ENCODE measurements at regions of chr6 and their contacts with region 1.

Region 1: DNA sequence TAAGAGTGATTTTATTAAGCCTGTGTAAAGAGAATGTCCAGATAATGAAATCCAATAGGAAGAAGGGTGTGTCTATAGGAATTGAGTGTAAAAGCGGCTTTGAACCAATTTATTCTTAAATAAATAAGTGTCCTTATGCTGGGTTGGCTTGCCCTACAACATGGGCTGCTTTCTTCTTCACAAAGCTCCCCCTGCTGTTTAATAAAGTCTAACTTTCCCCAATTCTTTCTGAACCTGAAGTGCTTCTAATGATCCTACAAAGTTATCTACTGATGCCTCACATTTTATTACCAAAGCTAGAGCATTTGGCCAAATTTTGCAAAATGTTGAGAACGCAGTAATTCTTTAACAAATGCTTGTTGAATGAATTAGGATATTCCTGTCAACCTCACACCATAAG is 36.3 kb upstream of the SIRT5 start:
- DNase-seq: no peak
- H3K4me3 ChIP-seq: no peak overlapping the region
- H3K27ac ChIP-seq: no peak overlapping the region
- H3K4me1 ChIP-seq: no peaks in the 10 kb centered on the region
- H3K27me3 ChIP-seq: no peaks in the 10 kb centered on the region
- CTCF ChIP-seq: peak in 3 of 4 experiments; percentile 41 to 60 (median 57)
- POLR2A ChIP-seq: no peak

Region 2: DNA sequence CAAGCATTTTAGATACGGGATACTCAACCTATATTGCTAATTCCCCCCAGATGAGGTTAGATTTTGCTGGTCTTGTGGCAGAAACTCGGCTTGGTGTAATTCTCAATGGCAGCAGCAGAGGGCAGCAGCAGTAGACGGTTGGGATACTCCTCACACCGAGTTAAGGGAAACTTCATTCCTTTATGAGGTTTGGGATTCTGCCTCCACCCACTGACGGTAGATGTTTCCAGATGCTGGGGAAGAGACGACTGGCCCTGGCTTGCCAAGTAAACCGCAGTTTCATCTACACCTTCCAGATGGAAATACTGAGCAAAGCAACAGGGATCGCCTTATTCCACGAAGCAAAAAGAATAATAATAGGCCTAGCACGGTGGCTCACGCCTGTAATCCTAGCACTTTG is 201.5 kb before region 1 on chr6:
- intact Hi-C with region 1: loop called (anchors 2 kb)
- DNase-seq: peak; percentile 74
- H3K4me3 ChIP-seq: no peak overlapping the region
- H3K27ac ChIP-seq: no peak overlapping the region
- H3K4me1 ChIP-seq: no peaks in the 10 kb centered on the region
- H3K27me3 ChIP-seq: no peaks in the 10 kb centered on the region
- CTCF ChIP-seq: peak; percentile 88 to 92 (median 91)
- POLR2A ChIP-seq: no peak

Measured in prostate gland (tissue), 2 donors.